ENCODE measurements at regions of chr4 and their contacts with region 1.

Region 1: GRCh38 chr4:154559494-154560418 is 3.1 kb upstream of the FGB start:
- DNase-seq: no peak
- H3K4me3 ChIP-seq: no peak overlapping the region
- H3K27ac ChIP-seq: no peak overlapping the region
- H3K27me3 ChIP-seq: no peaks in the 10 kb centered on the region
- CTCF ChIP-seq: peak; percentile 64

Region 2: GRCh38 chr4:154192585-154192984 is 367.2 kb before region 1 on chr4:
- CTCF ChIA-PET with region 1: no interaction called
- POLR2A ChIA-PET with region 1: no interaction called
- DNase-seq: no peak
- H3K4me3 ChIP-seq: no peak overlapping the region
- H3K27ac ChIP-seq: no peak overlapping the region
- H3K27me3 ChIP-seq: no peaks in the 10 kb centered on the region
- CTCF ChIP-seq: no peak

Region 3: GRCh38 chr4:154435895-154436294 is 123.9 kb before region 1 on chr4:
- CTCF ChIA-PET with region 1: no interaction called
- POLR2A ChIA-PET with region 1: no interaction called
- DNase-seq: no peak
- H3K4me3 ChIP-seq: no peak overlapping the region
- H3K27ac ChIP-seq: no peak overlapping the region
- H3K27me3 ChIP-seq: no peaks in the 10 kb centered on the region
- CTCF ChIP-seq: no peak

Region 4: DNA sequence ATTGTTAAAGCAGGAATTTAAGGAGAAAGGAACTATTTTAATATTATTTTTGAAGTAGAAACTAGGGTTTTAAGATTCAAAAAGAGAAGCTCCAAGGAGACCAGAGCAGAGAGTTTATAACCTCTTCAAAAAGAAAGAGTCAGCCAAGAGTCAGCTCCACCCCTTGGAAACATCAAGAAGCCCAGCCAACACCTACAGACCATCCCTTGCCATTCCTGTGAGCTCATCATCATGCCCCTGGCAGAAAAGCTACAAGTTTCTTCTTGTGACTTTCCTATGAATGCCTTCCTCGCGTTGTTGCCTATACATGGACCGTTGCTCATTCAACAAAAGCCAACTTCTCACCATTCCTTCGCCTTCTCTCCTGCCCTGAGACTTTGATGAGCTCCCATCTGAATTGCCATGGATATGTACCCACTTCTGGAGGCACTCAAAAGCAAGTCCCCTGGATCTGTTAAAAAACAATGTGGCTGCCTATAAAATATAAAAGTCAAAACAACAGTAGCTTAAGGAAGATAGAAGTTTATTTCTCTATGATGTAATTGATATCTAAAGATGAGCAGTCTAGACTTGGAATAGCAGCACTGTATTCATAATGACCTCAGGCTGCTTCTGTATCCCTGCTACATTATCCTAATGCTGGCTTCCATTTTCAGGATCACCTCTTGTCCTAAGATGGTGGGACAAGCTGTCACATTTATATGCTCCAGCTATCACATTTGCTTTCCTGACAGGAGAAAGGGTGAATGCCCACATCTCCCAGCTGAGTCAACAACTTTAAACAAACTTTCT is 29.8 kb before region 1 on chr4:
- CTCF ChIA-PET with region 1: interaction called, 12 read pairs
- POLR2A ChIA-PET with region 1: no interaction called
- DNase-seq: no peak
- H3K4me3 ChIP-seq: no peak overlapping the region
- H3K27ac ChIP-seq: no peak overlapping the region
- H3K27me3 ChIP-seq: no peaks in the 10 kb centered on the region
- CTCF ChIP-seq: no peak

Region 5: GRCh38 chr4:154545689-154546088 is 14.1 kb before region 1 on chr4:
- CTCF ChIA-PET with region 1: interaction called, 57 read pairs
- POLR2A ChIA-PET with region 1: no interaction called
- DNase-seq: no peak
- H3K4me3 ChIP-seq: no peak overlapping the region
- H3K27ac ChIP-seq: no peak overlapping the region
- H3K27me3 ChIP-seq: no peaks in the 10 kb centered on the region
- CTCF ChIP-seq: 0 out of 2 replicates have a peak, but pooled peaks have one; percentile 22

Region 6: GRCh38 chr4:154574311-154574710 is 14.6 kb after region 1 on chr4:
- CTCF ChIA-PET with region 1: interaction called, 28 read pairs
- POLR2A ChIA-PET with region 1: no interaction called
- DNase-seq: no peak
- H3K4me3 ChIP-seq: no peak overlapping the region
- H3K27ac ChIP-seq: no peak overlapping the region
- H3K27me3 ChIP-seq: no peaks in the 10 kb centered on the region
- CTCF ChIP-seq: no peak

Region 7: DNA sequence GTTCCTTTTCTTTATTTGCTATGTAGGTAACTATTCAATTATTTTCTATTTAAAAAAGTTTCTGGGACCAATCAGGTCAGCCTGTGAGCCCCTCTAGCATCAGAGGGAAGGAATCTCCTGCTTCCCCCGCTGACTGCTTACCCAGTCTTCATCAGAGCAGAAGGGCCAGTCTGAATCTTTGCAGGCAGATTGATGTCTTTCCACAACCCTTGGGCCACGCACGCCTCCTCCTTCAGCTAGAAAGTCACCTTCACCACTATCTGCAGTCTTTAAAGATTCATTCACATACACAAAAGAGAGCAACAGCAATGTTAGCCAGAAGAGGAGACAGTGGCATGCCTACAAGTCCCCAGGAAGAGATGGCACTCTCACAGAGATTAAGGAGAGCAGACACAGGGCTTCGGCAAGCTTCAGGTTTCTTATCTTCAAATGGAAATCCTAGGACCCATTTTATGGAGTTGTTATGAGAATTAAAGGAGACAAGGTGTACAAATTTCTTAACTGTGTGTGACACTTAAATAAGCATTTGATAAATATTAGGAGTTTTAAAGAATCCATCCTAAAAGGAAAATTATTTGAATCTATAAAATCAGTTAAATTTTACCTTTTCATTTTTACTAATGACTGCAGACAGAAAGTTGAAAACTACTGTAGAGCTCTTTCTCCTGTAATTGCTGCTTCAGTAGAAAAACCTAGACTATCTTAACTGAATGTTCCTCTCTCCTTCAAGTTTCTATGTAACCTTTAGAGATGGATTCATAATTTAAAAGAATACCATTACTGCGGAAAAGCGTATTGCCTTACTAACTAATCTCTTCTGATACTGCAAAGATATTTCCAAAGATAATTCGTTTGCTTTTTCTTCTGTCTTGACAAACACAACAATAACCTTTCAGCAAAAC is 29.8 kb after region 1 on chr4:
- CTCF ChIA-PET with region 1: interaction called, 15 read pairs
- POLR2A ChIA-PET with region 1: no interaction called
- DNase-seq: no peak
- H3K4me3 ChIP-seq: no peak overlapping the region
- H3K27ac ChIP-seq: no peak overlapping the region
- H3K27me3 ChIP-seq: no peaks in the 10 kb centered on the region
- CTCF ChIP-seq: no peak

Region 8: DNA sequence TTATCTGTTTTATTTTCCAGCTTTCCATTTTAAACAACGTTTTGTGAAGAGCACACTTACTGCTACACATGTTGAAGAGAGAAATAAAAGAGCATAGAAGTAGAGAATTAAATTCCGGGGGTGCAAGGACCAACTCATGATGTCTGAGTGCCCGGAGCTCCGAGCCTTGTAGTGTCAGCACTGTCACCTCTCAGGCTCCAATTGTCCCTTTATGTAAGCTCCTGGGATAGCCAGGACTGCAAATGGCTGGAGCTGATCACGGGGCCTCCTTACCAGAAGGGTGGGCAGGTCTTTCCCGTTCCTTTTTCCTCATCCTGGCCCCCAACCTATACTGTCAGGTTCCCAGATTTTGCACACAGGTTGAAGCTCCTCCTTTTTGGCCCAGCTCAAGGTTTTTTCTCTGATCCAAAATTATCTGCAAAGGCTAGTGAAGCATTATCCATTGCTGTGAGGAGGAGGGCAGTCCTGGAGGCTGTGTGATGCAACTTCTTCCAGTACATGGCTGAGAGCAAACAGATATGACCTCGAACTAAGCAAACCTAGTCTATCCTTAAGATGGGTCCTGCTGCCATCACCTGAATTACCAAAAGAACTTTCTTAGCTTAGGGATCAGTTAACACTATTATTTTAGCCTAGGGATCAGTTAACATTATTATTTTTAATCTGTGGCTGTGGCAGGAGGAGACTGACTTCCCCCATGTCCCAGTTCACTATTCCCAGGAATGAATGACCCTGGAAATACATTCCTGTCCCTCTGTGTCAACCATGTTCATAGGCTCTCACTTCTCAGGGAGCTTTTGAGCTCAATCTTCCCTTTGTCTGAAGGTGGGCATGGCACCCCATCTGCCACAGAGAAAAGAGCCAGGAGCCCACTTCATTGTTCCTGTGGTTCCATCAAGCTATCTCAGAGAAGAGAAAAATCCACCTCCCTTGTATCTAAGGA is 53.0 kb after region 1 on chr4 and contains the start of gene FGG:
- CTCF ChIA-PET with region 1: interaction called, 183 read pairs
- POLR2A ChIA-PET with region 1: no interaction called
- DNase-seq: no peak
- H3K4me3 ChIP-seq: no peak within 1 kb of the TSS
- H3K27ac ChIP-seq: no peak within 1 kb of the TSS
- H3K27me3 ChIP-seq: no peaks in the 10 kb centered on the region
- CTCF ChIP-seq: no peak
- polyA plus RNA-seq, gene FGG: 0.07 TPM in 1 of 2 replicates, not detected in the other

Region 9: GRCh38 chr4:154642373-154643009 is 82.7 kb after region 1 on chr4:
- CTCF ChIA-PET with region 1: interaction called, 10 read pairs
- POLR2A ChIA-PET with region 1: no interaction called
- DNase-seq: no peak
- H3K4me3 ChIP-seq: no peak overlapping the region
- H3K27ac ChIP-seq: no peak overlapping the region
- H3K27me3 ChIP-seq: no peaks in the 10 kb centered on the region
- CTCF ChIP-seq: no peak

Measured in AG04450 (cell line).